Natural killer cell (primary cell): ENCODE measurements at regions of chr2 and their contacts with region 1.

Region 1: GRCh38 chr2:54522624-54523281 is 66.6 kb downstream of the SPTBN1 start:
- DNase-seq: peak; percentile 33 to 91
- ATAC-seq: peak; percentile 85 to 97 (median 96)
- H3K4me3 ChIP-seq: no peak overlapping the region
- H3K4me3 Mint-ChIP-seq: peak overlapping the region; percentile 76
- H3K27ac ChIP-seq: no peak overlapping the region
- H3K27ac Mint-ChIP-seq: peak overlapping the region; percentile 71 to 80
- H3K4me1 ChIP-seq: peaks cover 3% of the 10 kb centered on the region
- H3K4me1 Mint-ChIP-seq: peaks cover 7% of the 10 kb centered on the region in 2 donors
- H3K27me3 ChIP-seq: no peaks in the 10 kb centered on the region
- H3K27me3 Mint-ChIP-seq: peaks cover 9 to 13% of the 10 kb centered on the region in 2 donors
- CTCF ChIP-seq: peak; percentile 83

Region 2: GRCh38 chr2:54597153-54597848 is 74.5 kb after region 1 on chr2:
- intact Hi-C with region 1: loop called (anchors 1 kb)
- DNase-seq: peak in 1 of 2 donors; percentile 54
- ATAC-seq: peak; percentile 60 to 77 (median 75)
- H3K4me3 ChIP-seq: no peak overlapping the region
- H3K4me3 Mint-ChIP-seq: peak overlapping the region; percentile 68
- H3K27ac ChIP-seq: peak overlapping the region; percentile 10
- H3K27ac Mint-ChIP-seq: peak overlapping the region; percentile 83 to 89
- H3K4me1 ChIP-seq: peaks cover 64% of the 10 kb centered on the region
- H3K4me1 Mint-ChIP-seq: peaks cover 50 to 65% of the 10 kb centered on the region in 2 donors
- H3K27me3 ChIP-seq: no peaks in the 10 kb centered on the region
- H3K27me3 Mint-ChIP-seq: no peaks in the 10 kb centered on the region
- CTCF ChIP-seq: no peak

Region 3: DNA sequence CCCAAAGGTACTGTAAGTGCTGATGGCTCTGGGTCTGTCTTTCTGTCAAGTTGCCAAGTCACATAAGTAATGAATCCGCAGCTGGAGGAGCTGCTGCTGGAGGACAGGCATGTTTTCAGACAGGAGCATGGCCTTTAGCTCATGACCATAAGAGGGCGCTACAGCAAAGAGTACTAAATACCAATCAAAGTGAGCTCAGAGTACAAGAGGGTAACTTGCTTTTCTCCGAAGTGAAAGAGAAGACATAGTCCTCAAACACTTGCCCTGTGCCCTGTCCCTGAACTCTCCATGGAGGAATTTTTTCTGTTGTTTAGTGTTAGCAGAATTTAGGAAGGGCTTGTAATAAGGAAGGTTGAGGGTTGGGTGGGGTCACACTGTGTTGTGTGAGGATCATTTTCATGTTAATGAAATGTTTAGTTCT is 142.7 kb after region 1 on chr2:
- intact Hi-C with region 1: loop called (anchors 5 kb)
- DNase-seq: peak in 1 of 2 donors; percentile 72
- ATAC-seq: peak; percentile 36 to 64 (median 57)
- H3K4me3 ChIP-seq: no peak overlapping the region
- H3K4me3 Mint-ChIP-seq: no peak overlapping the region
- H3K27ac ChIP-seq: no peak overlapping the region
- H3K27ac Mint-ChIP-seq: peak overlapping the region in 1 of 2 donors; percentile 13
- H3K4me1 ChIP-seq: peaks cover 5% of the 10 kb centered on the region
- H3K4me1 Mint-ChIP-seq: peaks cover 0 to 5% of the 10 kb centered on the region in 2 donors
- H3K27me3 ChIP-seq: no peaks in the 10 kb centered on the region
- H3K27me3 Mint-ChIP-seq: no peaks in the 10 kb centered on the region
- CTCF ChIP-seq: peak; percentile 62

Region 4: DNA sequence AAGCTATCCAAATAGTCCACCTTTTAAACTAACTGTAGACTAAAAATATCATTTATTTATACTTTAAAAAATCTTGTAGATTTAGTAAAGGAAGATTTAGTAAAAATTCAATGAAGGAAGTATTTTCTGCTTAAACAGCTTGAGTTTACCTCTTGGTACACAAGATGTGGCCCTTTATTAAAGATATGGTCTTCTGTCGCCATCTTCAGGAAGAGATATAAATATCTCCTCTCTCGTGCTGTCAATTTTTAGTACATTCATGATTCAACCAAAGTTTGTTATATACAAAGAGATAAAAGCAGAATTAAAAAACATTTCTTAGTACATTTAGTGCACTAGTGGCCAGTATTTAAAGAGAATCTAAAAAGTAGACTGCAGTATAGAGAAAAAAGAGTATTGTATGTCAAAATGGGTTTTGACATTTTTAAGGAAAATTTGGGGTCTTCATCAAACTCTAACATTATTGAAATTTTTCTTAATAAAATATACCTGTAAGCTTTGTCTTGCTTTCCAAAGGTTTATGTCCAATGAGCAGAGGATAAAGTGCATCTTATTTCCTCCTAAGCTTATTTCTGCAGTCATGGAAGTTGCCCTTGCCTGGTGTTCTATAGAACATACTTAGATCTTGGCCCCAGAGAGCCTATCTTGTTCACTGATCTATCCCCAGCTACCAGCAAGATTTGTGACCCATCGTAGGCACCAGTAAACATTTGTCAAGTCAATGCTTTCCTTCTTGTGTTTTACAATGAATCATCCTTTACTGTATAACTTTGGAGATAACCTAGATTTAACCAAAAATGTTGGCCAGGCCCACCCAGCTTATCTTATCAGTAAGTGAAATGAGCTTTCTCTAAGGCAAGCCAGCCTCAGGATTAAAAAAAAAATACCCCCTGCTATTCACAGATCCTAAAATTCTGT is 182.2 kb after region 1 on chr2:
- intact Hi-C with region 1: loop called (anchors 1 kb)
- DNase-seq: peak in 1 of 2 donors; percentile 79
- ATAC-seq: peak; percentile 64 to 77 (median 73)
- H3K4me3 ChIP-seq: no peak overlapping the region
- H3K4me3 Mint-ChIP-seq: no peak overlapping the region
- H3K27ac ChIP-seq: no peak overlapping the region
- H3K27ac Mint-ChIP-seq: no peak overlapping the region
- H3K4me1 ChIP-seq: peaks cover 13% of the 10 kb centered on the region
- H3K4me1 Mint-ChIP-seq: peaks cover 0 to 5% of the 10 kb centered on the region in 2 donors
- H3K27me3 ChIP-seq: peaks cover 21% of the 10 kb centered on the region
- H3K27me3 Mint-ChIP-seq: peaks cover 15 to 38% of the 10 kb centered on the region in 2 donors
- CTCF ChIP-seq: peak; percentile 76

Region 5: GRCh38 chr2:54838585-54839035 is 315.9 kb after region 1 on chr2:
- intact Hi-C with region 1: loop called (anchors 1 kb)
- DNase-seq: peak; percentile 49 to 84
- ATAC-seq: peak; percentile 74 to 88 (median 86)
- H3K4me3 ChIP-seq: no peak overlapping the region
- H3K4me3 Mint-ChIP-seq: no peak overlapping the region
- H3K27ac ChIP-seq: no peak overlapping the region
- H3K27ac Mint-ChIP-seq: no peak overlapping the region
- H3K4me1 ChIP-seq: no peaks in the 10 kb centered on the region
- H3K4me1 Mint-ChIP-seq: no peaks in the 10 kb centered on the region
- H3K27me3 ChIP-seq: no peaks in the 10 kb centered on the region
- H3K27me3 Mint-ChIP-seq: peaks cover 0 to 3% of the 10 kb centered on the region in 2 donors
- CTCF ChIP-seq: peak; percentile 92